ENCODE measurements at regions of chr2 and their contacts with region 1.

Region 1: GRCh38 chr2:65264821-65265670 is 37.4 kb downstream of the ACTR2 start:
- DNase-seq: no peak
- H3K4me3 Mint-ChIP-seq: no peak overlapping the region
- H3K27ac Mint-ChIP-seq: no peak overlapping the region
- H3K4me1 Mint-ChIP-seq: peaks cover 17% of the 10 kb centered on the region
- H3K27me3 Mint-ChIP-seq: no peaks in the 10 kb centered on the region

Region 2: GRCh38 chr2:65554765-65555591 is 289.9 kb after region 1 on chr2:
- intact Hi-C with region 1: loop called (anchors 1 kb)
- DNase-seq: no peak
- H3K4me3 Mint-ChIP-seq: peak overlapping the region; percentile 6
- H3K27ac Mint-ChIP-seq: peak overlapping the region; percentile 38
- H3K4me1 Mint-ChIP-seq: peaks cover 16% of the 10 kb centered on the region
- H3K27me3 Mint-ChIP-seq: peaks cover 30% of the 10 kb centered on the region

Measured in activated T-helper 1 cell treated with anti-CD3 and anti-CD28 coated beads, Interleukin-12 subunit alpha, Interleukin-12 subunit beta, Interleukin-2, Interleukin-4 antibody, amounts not matched to agents 30 ng/mL and 10 ng/mL and 1 ng/mL, durations not matched to agents 14 hours and 24 hours and 36 hours (primary cell).